CD4-positive, alpha-beta memory T cell (primary cell): ENCODE measurements at regions of chr1 and their contacts with region 1.

Region 1: DNA sequence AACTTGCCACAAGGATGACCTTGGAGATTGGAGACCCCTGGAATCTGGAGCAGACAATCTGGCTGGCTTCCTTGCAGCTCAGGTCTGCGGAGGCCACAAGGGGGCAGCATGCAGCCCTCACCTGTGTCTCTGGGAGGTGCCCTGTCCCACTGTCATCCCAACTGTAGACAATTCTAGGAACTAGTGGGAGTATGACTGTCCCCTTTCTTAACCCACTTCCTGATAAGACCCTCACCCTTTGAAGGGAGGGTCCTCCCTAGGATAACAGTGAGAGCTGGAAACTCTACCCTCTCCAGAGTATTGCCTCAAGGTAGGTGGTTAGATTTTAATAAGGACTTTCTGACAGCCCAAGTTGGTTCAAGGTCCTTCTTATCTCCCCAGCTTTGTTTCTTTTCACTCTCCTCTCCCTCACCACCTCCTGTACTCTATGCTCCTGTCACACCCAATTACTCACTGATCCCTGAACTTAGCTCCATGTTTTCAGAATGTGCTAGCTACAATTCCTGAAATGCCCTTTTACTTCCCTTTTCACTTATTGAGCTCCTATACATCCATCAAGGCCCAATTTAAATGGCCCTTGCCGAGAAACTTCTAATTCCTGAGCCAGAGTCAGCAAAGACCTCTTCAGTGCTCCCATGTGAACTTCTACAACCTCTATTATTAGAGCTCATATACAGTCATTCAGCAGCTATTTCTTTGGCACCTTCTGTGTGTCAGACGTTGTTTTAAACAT is 9.2 kb upstream of the KCNQ4 start:
- DNase-seq: peak; percentile 42 to 53 (median 51)
- H3K4me3 ChIP-seq: no peak overlapping the region
- H3K4me3 Mint-ChIP-seq: no peak overlapping the region
- H3K27ac ChIP-seq: no peak overlapping the region
- H3K27ac Mint-ChIP-seq: peak overlapping the region in 1 of 7 donors; percentile 24
- H3K4me1 ChIP-seq: no peaks in the 10 kb centered on the region
- H3K4me1 Mint-ChIP-seq: peaks cover 0 to 2% (median 0%) of the 10 kb centered on the region in 4 donors
- H3K27me3 ChIP-seq: no peaks in the 10 kb centered on the region
- H3K27me3 Mint-ChIP-seq: no peaks in the 10 kb centered on the region

Region 2: GRCh38 chr1:40204856-40205255 is 569.6 kb before region 1 on chr1:
- CTCF ChIA-PET with region 1: no interaction called
- POLR2A ChIA-PET with region 1: no interaction called
- intact Hi-C with region 1: no loop called
- DNase-seq: no peak
- H3K4me3 ChIP-seq: no peak overlapping the region
- H3K4me3 Mint-ChIP-seq: no peak overlapping the region
- H3K27ac ChIP-seq: no peak overlapping the region
- H3K27ac Mint-ChIP-seq: peak overlapping the region in 2 of 7 donors; percentile 35 to 53
- H3K4me1 ChIP-seq: no peaks in the 10 kb centered on the region
- H3K4me1 Mint-ChIP-seq: peaks cover 0 to 14% (median 4%) of the 10 kb centered on the region in 4 donors
- H3K27me3 ChIP-seq: no peaks in the 10 kb centered on the region
- H3K27me3 Mint-ChIP-seq: no peaks in the 10 kb centered on the region

Region 3: GRCh38 chr1:40612345-40612831 is 162.0 kb before region 1 on chr1:
- CTCF ChIA-PET with region 1: interaction called, 4 read pairs
- POLR2A ChIA-PET with region 1: no interaction called
- intact Hi-C with region 1: loop called (anchors 5 kb)
- DNase-seq: peak; percentile 62 to 69 (median 65)
- H3K4me3 ChIP-seq: no peak overlapping the region
- H3K4me3 Mint-ChIP-seq: no peak overlapping the region
- H3K27ac ChIP-seq: no peak overlapping the region
- H3K27ac Mint-ChIP-seq: no peak overlapping the region
- H3K4me1 ChIP-seq: no peaks in the 10 kb centered on the region
- H3K4me1 Mint-ChIP-seq: no peaks in the 10 kb centered on the region
- H3K27me3 ChIP-seq: no peaks in the 10 kb centered on the region
- H3K27me3 Mint-ChIP-seq: peaks cover 2% of the 10 kb centered on the region in 2 donors

Region 4: DNA sequence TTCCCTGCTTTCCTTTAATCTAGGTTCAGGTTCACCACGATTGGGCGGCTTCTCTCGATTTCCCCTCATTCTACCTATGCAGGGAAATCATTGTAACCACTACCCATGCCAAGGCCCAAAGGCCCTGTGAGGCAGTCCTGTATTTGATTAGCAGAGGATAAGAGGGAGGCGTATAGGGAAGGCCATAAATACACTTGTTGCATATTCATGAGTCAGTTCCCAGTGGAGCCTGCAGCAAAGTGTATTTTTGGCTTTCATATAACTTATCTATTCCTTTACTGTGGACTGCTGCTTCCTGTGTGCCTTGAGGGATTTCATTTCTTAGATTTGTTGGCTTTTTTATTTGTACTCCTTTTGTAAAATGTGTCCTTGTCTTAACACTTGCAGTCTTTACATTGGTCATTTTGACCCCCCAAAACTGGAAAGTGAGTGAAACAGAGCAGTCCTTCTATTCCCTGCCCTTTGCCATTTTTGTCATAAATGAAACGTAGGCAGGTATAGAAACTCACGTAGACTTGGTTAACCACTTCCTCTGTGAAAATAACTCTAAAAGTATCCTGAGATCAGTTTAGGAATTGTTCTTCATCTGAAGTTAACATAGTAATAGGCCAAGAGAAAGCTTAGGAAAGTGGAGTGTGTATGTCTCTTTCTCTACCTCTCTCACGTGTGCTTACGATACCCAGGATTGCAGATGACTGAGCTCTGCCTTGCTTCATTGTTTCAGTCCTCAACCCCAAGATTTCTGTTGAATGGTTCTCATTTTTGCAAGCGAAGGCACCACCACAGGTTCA is 10.5 kb before region 1 on chr1:
- CTCF ChIA-PET with region 1: interaction called, 58 read pairs
- POLR2A ChIA-PET with region 1: no interaction called
- intact Hi-C with region 1: no loop called
- DNase-seq: peak in 3 of 5 donors; percentile 6 to 26 (median 17)
- H3K4me3 ChIP-seq: no peak overlapping the region
- H3K4me3 Mint-ChIP-seq: peak overlapping the region; percentile 18 to 73 (median 64)
- H3K27ac ChIP-seq: peak overlapping the region; percentile 12
- H3K27ac Mint-ChIP-seq: peak overlapping the region; percentile 20 to 96 (median 88)
- H3K4me1 ChIP-seq: peaks cover 25% of the 10 kb centered on the region
- H3K4me1 Mint-ChIP-seq: peaks cover 23 to 49% (median 30%) of the 10 kb centered on the region in 4 donors
- H3K27me3 ChIP-seq: no peaks in the 10 kb centered on the region
- H3K27me3 Mint-ChIP-seq: no peaks in the 10 kb centered on the region

Region 5: GRCh38 chr1:40849801-40850592 is 75.6 kb after region 1 on chr1:
- CTCF ChIA-PET with region 1: interaction called, 180 read pairs
- POLR2A ChIA-PET with region 1: interaction called, 5 read pairs
- intact Hi-C with region 1: loop called (anchors 1 kb)
- DNase-seq: peak; percentile 67 to 78 (median 73)
- H3K4me3 ChIP-seq: no peak overlapping the region
- H3K4me3 Mint-ChIP-seq: peak overlapping the region in 7 of 8 donors; percentile 17 to 56 (median 45)
- H3K27ac ChIP-seq: no peak overlapping the region
- H3K27ac Mint-ChIP-seq: peak overlapping the region in 5 of 7 donors; percentile 19 to 71 (median 35)
- H3K4me1 ChIP-seq: peaks cover 9% of the 10 kb centered on the region
- H3K4me1 Mint-ChIP-seq: peaks cover 5 to 14% (median 11%) of the 10 kb centered on the region in 4 donors
- H3K27me3 ChIP-seq: no peaks in the 10 kb centered on the region
- H3K27me3 Mint-ChIP-seq: no peaks in the 10 kb centered on the region

Region 6: GRCh38 chr1:40884055-40884795 is 109.8 kb after region 1 on chr1:
- CTCF ChIA-PET with region 1: no interaction called
- POLR2A ChIA-PET with region 1: no interaction called
- intact Hi-C with region 1: no loop called
- DNase-seq: no peak
- H3K4me3 ChIP-seq: no peak overlapping the region
- H3K4me3 Mint-ChIP-seq: peak overlapping the region in 6 of 8 donors; percentile 17 to 74 (median 40)
- H3K27ac ChIP-seq: no peak overlapping the region
- H3K27ac Mint-ChIP-seq: peak overlapping the region in 2 of 7 donors; percentile 56 to 64
- H3K4me1 ChIP-seq: no peaks in the 10 kb centered on the region
- H3K4me1 Mint-ChIP-seq: peaks cover 1 to 5% (median 4%) of the 10 kb centered on the region in 4 donors
- H3K27me3 ChIP-seq: no peaks in the 10 kb centered on the region
- H3K27me3 Mint-ChIP-seq: peaks cover 31 to 42% of the 10 kb centered on the region in 2 donors

Region 7: GRCh38 chr1:41003640-41004220 is 229.3 kb after region 1 on chr1:
- CTCF ChIA-PET with region 1: interaction called, 12 read pairs
- POLR2A ChIA-PET with region 1: no interaction called
- intact Hi-C with region 1: no loop called
- DNase-seq: peak; percentile 82 to 93 (median 87)
- H3K4me3 ChIP-seq: no peak overlapping the region
- H3K4me3 Mint-ChIP-seq: peak overlapping the region in 4 of 8 donors; percentile 1 to 48 (median 18)
- H3K27ac ChIP-seq: no peak overlapping the region
- H3K27ac Mint-ChIP-seq: peak overlapping the region; percentile 11 to 86 (median 77)
- H3K4me1 ChIP-seq: peaks cover 17% of the 10 kb centered on the region
- H3K4me1 Mint-ChIP-seq: peaks cover 11 to 28% (median 20%) of the 10 kb centered on the region in 4 donors
- H3K27me3 ChIP-seq: no peaks in the 10 kb centered on the region
- H3K27me3 Mint-ChIP-seq: no peaks in the 10 kb centered on the region